Tibial artery (tissue), 4 donors: ENCODE measurements at regions of chr3 and their contacts with region 1.

Region 1: GRCh38 chr3:148450819-148451218 is 246.9 kb upstream of the AGTR1 start:
- DNase-seq: no peak
- H3K4me3 ChIP-seq: no peak overlapping the region
- H3K27ac ChIP-seq: no peak overlapping the region
- H3K4me1 ChIP-seq: no peaks in the 10 kb centered on the region
- H3K27me3 ChIP-seq: no peaks in the 10 kb centered on the region
- CTCF ChIP-seq: no peak

Region 2: DNA sequence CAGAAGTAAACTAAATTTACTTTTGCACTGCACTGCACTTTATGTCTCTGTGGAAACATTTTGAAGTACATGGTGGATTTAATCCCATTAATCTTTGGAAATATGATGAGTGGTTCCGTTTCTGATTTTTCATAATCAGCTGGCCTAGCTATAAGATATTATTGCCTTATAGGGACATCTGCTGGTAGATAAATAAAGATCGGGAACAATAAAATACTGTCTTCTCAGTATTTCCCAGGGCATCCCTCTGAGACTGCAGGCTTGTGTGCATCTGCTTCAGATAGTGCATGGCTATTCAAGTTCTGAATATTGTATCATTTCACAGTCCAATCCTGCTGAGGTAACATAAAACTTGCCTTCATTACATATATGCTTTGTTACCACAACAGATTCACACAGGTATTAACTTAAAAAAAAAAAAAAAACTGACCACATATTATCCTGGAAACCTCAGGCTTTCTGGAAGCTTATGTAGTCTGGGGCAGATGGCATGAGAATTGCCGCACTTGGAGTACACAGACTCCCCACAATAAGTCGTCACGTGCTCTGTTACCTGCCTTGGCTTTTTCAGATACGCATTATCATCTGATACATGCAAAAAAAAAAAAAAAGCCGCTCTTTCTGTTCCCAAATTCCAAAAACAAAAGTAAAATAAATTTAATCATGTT is 83.9 kb before region 1 on chr3:
- intact Hi-C with region 1: loop called (anchors 2 kb)
- DNase-seq: no peak
- H3K4me3 ChIP-seq: no peak overlapping the region
- H3K27ac ChIP-seq: no peak overlapping the region
- H3K4me1 ChIP-seq: no peaks in the 10 kb centered on the region
- H3K27me3 ChIP-seq: no peaks in the 10 kb centered on the region
- CTCF ChIP-seq: no peak

Region 3: DNA sequence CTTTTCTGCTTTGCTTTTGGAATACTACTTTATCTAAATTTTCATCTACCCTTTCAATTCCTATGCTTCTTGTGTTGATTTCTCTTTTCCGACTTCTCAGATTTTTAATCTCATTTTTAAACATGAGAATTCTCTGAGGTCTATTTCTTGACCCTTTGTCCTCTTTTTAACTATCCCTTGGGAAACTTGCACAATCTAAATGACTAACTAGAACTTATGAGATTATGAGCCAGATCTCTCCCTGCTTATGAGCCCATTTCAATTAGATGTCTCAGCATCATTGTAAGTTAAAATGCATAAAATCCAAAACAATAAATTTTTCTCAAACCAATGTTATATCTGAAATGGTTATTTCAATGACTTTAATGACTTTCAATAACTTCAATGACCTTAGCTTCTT is 50.1 kb before region 1 on chr3:
- intact Hi-C with region 1: no loop called
- DNase-seq: no peak
- H3K4me3 ChIP-seq: no peak overlapping the region
- H3K27ac ChIP-seq: peak overlapping the region in 1 of 2 donors; percentile 41
- H3K4me1 ChIP-seq: peaks cover 0 to 26% (median 0%) of the 10 kb centered on the region in 4 donors
- H3K27me3 ChIP-seq: no peaks in the 10 kb centered on the region
- CTCF ChIP-seq: no peak